Activated CD4-positive, alpha-beta T cell treated with anti-CD3 and anti-CD28 coated beads for 36 hours (primary cell): ENCODE measurements at regions of chr6 and their contacts with region 1.

Region 1: DNA sequence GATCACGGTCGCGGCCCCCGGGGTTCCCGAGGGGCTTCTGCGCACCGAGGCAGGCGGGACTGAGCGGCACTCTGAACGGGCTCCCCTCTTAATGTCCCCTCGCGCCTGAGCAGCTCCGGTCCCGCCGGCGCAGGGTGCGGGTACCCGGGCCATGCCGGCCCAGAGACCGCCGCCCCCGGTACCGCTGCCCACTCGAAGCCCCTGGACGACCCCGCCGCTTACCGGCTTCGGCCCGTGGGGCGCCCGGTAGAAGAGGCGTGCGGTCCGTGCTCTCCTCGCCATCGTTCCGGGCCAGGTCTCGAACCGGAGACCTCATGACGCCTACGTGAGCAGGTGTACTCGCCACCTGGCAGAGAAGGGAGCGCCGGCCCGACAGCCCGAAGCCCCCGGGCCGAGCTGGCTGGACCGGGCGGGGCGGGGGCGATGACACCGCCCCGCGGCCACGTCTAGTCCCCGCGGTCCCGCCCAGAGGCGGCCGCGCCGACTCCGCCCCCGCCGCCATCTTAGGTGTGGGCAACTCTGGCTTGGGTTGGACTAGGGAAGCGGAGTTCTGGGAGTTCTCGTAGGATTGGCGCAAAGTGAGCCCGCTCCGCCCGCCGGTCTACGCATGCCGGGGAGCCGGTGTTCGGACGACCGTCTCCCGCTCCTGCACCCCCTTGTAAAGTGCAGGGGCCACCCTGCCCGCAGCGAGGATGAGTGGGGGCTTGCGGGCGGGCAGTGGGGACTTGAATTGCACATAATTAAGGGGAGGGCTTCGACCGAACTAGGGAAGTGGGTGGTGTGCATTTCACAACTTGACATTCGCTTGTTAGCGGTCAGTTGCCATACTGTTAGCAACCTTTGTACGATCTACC is at the start of gene SLC17A5:
- DNase-seq: peak; percentile 94
- ATAC-seq: peak; percentile 91
- H3K4me3 Mint-ChIP-seq: peak within 1 kb of the TSS; percentile 87
- H3K27ac Mint-ChIP-seq: peak within 1 kb of the TSS; percentile 94
- H3K4me1 Mint-ChIP-seq: peaks cover 29% of the 10 kb centered on the region
- H3K27me3 Mint-ChIP-seq: no peaks in the 10 kb centered on the region
- total RNA-seq, gene SLC17A5: 3.2 to 4.0 TPM

Region 2: DNA sequence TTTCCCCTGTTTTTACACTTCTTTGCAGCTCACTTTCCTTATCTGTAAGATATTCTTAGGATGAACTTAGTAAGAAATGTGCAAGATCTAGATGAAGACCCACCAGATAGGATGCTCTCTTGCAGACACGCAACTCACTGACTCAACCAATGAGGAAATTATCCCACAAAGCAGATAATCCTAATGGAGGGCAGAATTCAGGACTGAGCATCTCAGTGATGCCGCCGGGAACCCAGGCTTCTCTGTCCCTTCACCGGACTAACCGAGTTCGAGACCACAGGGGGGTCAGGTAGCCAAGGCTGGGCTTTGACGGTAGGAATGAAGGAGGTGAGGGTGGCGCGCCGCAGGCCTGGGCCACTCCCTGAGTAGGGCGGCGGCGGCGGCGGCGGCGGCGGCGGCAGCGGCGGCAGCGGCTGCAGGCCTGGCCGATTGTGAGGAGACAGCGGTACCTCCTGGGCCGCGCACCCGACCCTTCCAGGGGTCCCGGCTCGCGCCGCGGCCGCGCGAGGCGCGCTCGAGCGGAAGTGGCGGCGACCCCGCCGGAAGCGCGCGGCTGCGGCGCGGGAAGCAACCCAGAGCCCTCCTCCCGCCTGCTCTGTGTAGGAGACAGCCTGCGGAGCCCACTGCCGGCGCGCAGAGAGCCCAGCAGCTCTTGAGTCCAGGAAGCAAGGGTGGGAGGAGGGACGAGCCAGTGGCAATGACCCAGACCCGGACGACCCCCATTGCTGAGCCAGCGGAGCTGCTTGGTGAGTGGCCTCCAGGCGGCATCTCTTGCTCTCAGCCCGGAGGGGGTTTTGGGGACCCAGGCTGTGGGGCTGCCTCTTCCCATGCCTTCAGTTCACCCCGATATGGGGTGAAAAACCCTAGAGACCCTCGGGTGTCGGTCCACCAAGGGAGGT is 390.9 kb before region 1 on chr6 and contains the start of gene KHDC1:
- CTCF ChIA-PET with region 1: no interaction called
- POLR2A ChIA-PET with region 1: no interaction called
- intact Hi-C with region 1: loop called (anchors 2 to 10 kb)
- DNase-seq: peak; percentile 74
- ATAC-seq: peak; percentile 89
- H3K4me3 Mint-ChIP-seq: peak within 1 kb of the TSS; percentile 89
- H3K27ac Mint-ChIP-seq: peak within 1 kb of the TSS; percentile 93
- H3K4me1 Mint-ChIP-seq: peaks cover 26% of the 10 kb centered on the region
- H3K27me3 Mint-ChIP-seq: no peaks in the 10 kb centered on the region
- total RNA-seq, gene KHDC1: 2.8 to 4.2 TPM

Region 3: DNA sequence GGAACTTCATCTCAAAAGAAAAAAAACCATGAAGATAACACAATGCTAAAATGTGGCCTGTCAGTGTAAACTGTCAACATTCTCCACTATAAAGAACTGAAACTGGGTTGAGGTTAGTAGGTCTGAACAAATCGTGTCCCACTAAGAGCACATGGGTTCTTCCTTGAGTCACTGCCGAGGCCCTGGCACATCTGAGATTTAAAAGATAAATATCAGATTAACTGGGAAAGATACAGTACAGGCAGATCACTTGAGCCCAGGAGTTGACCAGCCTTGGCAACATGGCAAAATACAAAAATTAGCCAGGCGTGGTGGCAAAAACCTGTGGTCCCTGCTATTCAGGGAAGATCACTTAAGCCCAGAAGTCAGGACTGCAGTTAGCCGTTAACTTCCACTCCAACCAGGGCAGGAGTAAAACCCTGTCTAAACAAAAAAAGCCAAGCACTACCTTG is 138.6 kb before region 1 on chr6:
- CTCF ChIA-PET with region 1: interaction called, 25 read pairs
- POLR2A ChIA-PET with region 1: interaction called, 29 read pairs
- intact Hi-C with region 1: no loop called
- DNase-seq: peak; percentile 28
- ATAC-seq: peak; percentile 7
- H3K4me3 Mint-ChIP-seq: peak overlapping the region; percentile 97
- H3K27ac Mint-ChIP-seq: peak overlapping the region; percentile 98
- H3K4me1 Mint-ChIP-seq: peaks cover 37% of the 10 kb centered on the region
- H3K27me3 Mint-ChIP-seq: no peaks in the 10 kb centered on the region

Region 4: GRCh38 chr6:73585566-73586415 is 68.0 kb before region 1 on chr6:
- CTCF ChIA-PET with region 1: interaction called, 3 read pairs
- POLR2A ChIA-PET with region 1: no interaction called
- intact Hi-C with region 1: loop called (anchors 1 to 5 kb)
- DNase-seq: peak; percentile 55
- ATAC-seq: peak; percentile 79
- H3K4me3 Mint-ChIP-seq: peak overlapping the region; percentile 73
- H3K27ac Mint-ChIP-seq: peak overlapping the region; percentile 99
- H3K4me1 Mint-ChIP-seq: peaks cover 18% of the 10 kb centered on the region
- H3K27me3 Mint-ChIP-seq: no peaks in the 10 kb centered on the region

Region 5: GRCh38 chr6:73722318-73723060 is 68.7 kb after region 1 on chr6:
- CTCF ChIA-PET with region 1: no interaction called
- POLR2A ChIA-PET with region 1: interaction called, 6 read pairs
- intact Hi-C with region 1: loop called in 1 of 2 experiments (anchors 2 kb)
- DNase-seq: peak; percentile 55
- ATAC-seq: peak; percentile 95
- H3K4me3 Mint-ChIP-seq: no peak overlapping the region
- H3K27ac Mint-ChIP-seq: peak overlapping the region; percentile 74
- H3K4me1 Mint-ChIP-seq: peaks cover 35% of the 10 kb centered on the region
- H3K27me3 Mint-ChIP-seq: no peaks in the 10 kb centered on the region

Region 6: DNA sequence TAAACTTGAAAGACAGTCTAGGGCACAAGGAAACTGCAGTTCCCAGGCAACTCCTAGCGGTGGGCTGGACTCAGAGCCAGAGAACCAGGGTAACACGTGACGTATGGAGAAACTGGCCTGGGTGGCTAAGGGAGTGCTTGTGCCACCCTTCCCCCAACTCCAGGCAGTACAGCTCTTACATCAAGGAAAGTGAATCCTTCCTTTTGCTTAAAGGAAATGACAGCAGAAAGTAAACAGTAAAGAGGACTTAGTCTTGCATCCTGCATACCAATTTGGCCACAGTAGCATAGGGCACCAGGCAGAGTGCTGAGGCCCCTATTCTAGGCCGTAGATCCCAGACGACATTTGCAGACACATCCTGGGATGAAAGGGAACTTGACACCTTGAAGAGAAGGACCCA is 365.0 kb after region 1 on chr6:
- CTCF ChIA-PET with region 1: no interaction called
- POLR2A ChIA-PET with region 1: no interaction called
- intact Hi-C with region 1: no loop called
- DNase-seq: no peak
- ATAC-seq: no peak
- H3K4me3 Mint-ChIP-seq: no peak overlapping the region
- H3K27ac Mint-ChIP-seq: no peak overlapping the region
- H3K4me1 Mint-ChIP-seq: no peaks in the 10 kb centered on the region
- H3K27me3 Mint-ChIP-seq: no peaks in the 10 kb centered on the region

Region 7: DNA sequence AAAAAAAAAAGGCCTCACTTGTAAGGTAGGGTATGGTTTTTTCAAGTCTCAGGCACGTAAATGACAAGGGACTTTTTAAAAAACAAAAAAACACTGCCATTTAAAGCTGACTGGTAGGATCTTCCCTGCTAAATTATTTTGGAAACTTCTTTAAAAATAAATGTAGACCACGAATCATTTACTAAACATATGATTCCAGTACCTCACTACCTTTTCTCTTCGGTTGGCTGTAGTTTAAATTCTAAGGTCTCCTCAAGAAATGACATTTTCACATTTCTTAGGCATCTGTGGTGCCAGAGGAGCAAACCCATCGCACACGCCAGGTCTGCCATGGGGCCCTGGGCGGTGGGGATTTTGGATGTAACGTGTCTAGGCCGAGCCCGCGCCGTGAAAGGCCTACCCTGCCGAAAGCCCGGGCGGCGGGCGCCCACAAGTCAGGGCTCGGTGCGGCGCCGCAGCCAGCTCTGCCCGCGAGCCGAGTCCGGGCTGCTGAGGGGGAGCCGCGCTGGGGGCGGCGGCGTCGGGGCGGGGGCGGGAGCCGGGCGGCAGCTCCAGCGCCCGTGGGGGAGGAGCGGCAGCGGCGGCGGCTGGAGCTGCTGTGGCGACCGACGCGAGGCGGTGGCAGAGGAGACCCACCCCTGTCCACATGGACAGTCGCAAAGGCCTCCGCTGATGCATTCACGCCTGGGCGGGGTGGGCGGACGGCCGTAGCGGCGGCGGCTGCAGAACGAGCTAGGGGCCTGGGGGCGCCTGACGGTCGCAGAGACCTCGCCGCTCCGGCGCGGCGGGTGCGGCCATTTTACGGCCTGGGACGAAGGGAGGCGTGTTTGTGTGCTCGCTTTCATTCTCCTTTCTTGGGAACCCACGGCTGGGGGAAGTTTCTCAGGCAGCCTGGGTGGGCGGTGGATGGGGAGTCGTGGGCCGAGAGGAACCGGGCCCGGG is 1947.8 kb after region 1 on chr6 and contains the start of gene SENP6:
- CTCF ChIA-PET with region 1: no interaction called
- POLR2A ChIA-PET with region 1: no interaction called
- intact Hi-C with region 1: loop called in 1 of 2 experiments (anchors 5 kb)
- DNase-seq: peak; percentile 81
- ATAC-seq: peak; percentile 72
- H3K4me3 Mint-ChIP-seq: peak within 1 kb of the TSS; percentile 88
- H3K27ac Mint-ChIP-seq: peak within 1 kb of the TSS; percentile 99
- H3K4me1 Mint-ChIP-seq: peaks cover 55% of the 10 kb centered on the region
- H3K27me3 Mint-ChIP-seq: no peaks in the 10 kb centered on the region
- total RNA-seq, gene SENP6: 69.5 to 75.1 TPM